ENCODE measurements at regions of chr17 and their contacts with region 1.

Region 1: GRCh38 chr17:81927653-81928543 is at the start of gene MAFG:
- DNase-seq: peak; percentile 70 to 97
- H3K4me3 ChIP-seq: peak within 1 kb of the TSS; percentile 73
- H3K27ac ChIP-seq: peak within 1 kb of the TSS; percentile 87
- H3K4me1 ChIP-seq: peaks cover 27% of the 10 kb centered on the region
- H3K27me3 ChIP-seq: no peaks in the 10 kb centered on the region
- CTCF ChIP-seq: no peak; the same call in 1 of the 2 replicates
- total RNA-seq, gene MAFG: 79.5 and 85.9 TPM in 2 replicates

Region 2: DNA sequence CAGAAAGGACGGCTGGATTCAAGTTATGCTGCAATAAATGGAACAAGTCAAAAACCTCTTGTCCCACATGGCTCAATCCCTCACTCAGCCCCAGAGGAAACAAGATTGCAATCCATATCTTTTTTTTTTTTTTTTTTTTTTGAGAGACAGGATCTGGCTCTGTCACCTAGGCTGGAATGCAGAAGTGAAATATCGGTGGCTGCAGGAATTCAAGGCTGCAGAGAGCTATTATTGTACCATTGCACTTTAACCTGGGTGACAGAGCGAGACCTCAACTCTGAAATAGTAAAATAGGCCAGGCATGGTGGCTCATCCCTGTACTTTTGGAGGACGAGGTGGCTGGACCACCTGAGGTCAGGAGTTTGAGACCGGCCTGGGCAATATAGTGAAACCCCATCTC is 268.9 kb before region 1 on chr17:
- CTCF ChIA-PET with region 1: no interaction called
- POLR2A ChIA-PET with region 1: interaction called, 16 read pairs
- intact Hi-C with region 1: no loop called
- DNase-seq: peak; percentile 51 to 68
- H3K4me3 ChIP-seq: peak overlapping the region; percentile 15; the same call in 1 of the 2 replicates
- H3K27ac ChIP-seq: peak overlapping the region; percentile 65
- H3K4me1 ChIP-seq: peaks cover 21% of the 10 kb centered on the region
- H3K27me3 ChIP-seq: no peaks in the 10 kb centered on the region
- CTCF ChIP-seq: no peak

Region 3: GRCh38 chr17:81733507-81734404 is 194.1 kb before region 1 on chr17:
- CTCF ChIA-PET with region 1: no interaction called
- POLR2A ChIA-PET with region 1: interaction called, 11 read pairs
- intact Hi-C with region 1: no loop called
- DNase-seq: peak; percentile 55 to 92
- H3K4me3 ChIP-seq: no peak overlapping the region
- H3K27ac ChIP-seq: no peak overlapping the region
- H3K4me1 ChIP-seq: no peaks in the 10 kb centered on the region
- H3K27me3 ChIP-seq: no peaks in the 10 kb centered on the region
- CTCF ChIP-seq: peak; percentile 81

Region 4: GRCh38 chr17:81871387-81872230 is 56.3 kb before region 1 on chr17:
- CTCF ChIA-PET with region 1: interaction called, 4 read pairs
- POLR2A ChIA-PET with region 1: no interaction called
- intact Hi-C with region 1: loop called (anchors 5 kb)
- DNase-seq: peak; percentile 47 to 91
- H3K4me3 ChIP-seq: peak overlapping the region; percentile 88
- H3K27ac ChIP-seq: peak overlapping the region; percentile 87
- H3K4me1 ChIP-seq: 0 out of 2 replicates have a peak, but pooled peaks cover 14% of the 10 kb centered on the region
- H3K27me3 ChIP-seq: no peaks in the 10 kb centered on the region
- CTCF ChIP-seq: no peak; the same call in 1 of the 2 replicates

Region 5: DNA sequence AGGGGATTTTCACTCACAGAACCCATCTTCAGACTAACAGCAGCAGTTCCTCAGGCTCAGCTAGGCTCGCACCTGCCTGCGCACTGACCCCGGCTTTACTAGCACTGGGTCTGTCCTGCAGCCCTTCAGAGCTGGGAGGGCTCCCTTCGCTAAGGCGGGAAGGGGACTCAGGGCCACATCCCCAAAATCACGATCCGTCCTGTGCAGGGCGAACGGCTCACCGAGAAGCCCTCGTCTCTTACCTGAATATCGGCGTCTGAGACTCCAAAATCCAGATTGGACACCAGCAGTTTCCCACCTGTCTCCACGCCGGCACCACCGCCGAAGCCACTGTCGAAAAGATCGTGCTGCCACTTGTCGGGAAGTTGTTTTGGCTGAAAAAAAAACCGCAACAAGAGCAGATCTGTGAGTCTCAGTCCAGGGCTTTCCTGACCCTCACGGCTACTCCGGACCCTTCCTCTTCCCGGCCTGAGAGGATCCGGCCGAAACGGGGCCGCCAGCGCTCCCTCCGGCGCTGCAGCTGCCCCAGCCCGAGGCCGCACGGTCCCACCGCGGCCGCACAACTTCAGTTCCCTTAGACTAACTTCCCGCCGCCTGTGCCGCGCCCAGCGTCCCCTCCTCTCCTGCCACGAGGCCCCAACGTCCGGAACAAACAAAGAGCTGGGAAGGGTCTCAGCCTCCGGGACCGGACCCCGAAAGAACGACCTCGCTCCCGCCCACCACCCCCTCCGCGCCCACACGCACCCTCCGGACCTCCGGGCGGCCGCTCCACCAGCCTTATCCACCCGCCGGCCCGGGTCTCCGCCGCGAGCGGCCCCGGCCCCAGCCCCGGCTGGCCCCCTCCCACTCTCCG is 37.2 kb before region 1 on chr17:
- CTCF ChIA-PET with region 1: no interaction called
- POLR2A ChIA-PET with region 1: interaction called, 3 read pairs
- intact Hi-C with region 1: loop called (anchors 1 kb)
- DNase-seq: no peak
- H3K4me3 ChIP-seq: peak overlapping the region; percentile 66
- H3K27ac ChIP-seq: no peak overlapping the region
- H3K4me1 ChIP-seq: peaks cover 21% of the 10 kb centered on the region
- H3K27me3 ChIP-seq: no peaks in the 10 kb centered on the region
- CTCF ChIP-seq: no peak

Region 6: GRCh38 chr17:81917565-81918332 is 10.1 kb before region 1 on chr17 and contains the start of gene SIRT7:
- CTCF ChIA-PET with region 1: interaction called, 3 read pairs
- POLR2A ChIA-PET with region 1: interaction called, 8 read pairs
- intact Hi-C with region 1: loop called (anchors 1 kb)
- DNase-seq: peak; percentile 43 to 71
- H3K4me3 ChIP-seq: peak within 1 kb of the TSS; percentile 66
- H3K27ac ChIP-seq: peak within 1 kb of the TSS; percentile 62
- H3K4me1 ChIP-seq: peaks cover 51% of the 10 kb centered on the region
- H3K27me3 ChIP-seq: no peaks in the 10 kb centered on the region
- CTCF ChIP-seq: no peak
- total RNA-seq, gene SIRT7: 78.3 and 98.5 TPM in 2 replicates

Region 7: DNA sequence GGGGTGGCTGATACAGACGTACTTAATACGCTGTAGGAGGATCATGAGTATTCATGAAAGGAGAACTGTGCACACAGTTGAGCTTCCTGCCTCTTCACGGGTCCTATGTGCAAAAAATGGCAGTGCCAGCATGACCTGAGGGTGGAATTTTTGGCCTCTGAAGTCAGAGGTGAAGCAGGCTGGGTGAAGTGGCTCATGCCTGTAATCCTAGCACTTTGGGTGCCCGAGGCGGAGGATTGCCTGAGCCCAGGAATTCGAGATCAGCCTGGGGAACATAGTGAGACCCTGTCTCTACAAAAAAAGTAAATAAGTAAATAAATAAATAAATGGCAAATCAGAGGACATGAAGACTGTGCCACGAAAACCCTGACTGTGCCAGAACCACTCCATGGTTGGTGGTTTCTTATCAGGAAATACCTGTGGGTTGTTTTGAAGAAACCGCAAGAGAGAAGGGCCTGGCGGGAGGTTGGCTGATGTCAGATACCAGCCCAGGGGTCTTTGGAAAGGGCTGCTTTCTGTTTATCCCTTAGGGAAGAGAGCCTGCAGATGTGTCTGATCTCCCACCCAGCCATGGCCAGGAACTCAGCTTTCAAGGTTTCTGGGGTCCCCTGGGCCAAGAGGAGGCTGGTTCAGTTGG is 52.9 kb after region 1 on chr17:
- CTCF ChIA-PET with region 1: interaction called, 3 read pairs
- POLR2A ChIA-PET with region 1: no interaction called
- intact Hi-C with region 1: loop called (anchors 2 kb)
- DNase-seq: peak; percentile 87 to 92
- H3K4me3 ChIP-seq: no peak overlapping the region
- H3K27ac ChIP-seq: peak overlapping the region; percentile 86
- H3K4me1 ChIP-seq: peaks cover 33% of the 10 kb centered on the region
- H3K27me3 ChIP-seq: no peaks in the 10 kb centered on the region
- CTCF ChIP-seq: no peak

Measured in PC-9 (cell line).